GM18951 (cell line): ENCODE measurements at regions of chr12 and their contacts with region 1.

Region 1: DNA sequence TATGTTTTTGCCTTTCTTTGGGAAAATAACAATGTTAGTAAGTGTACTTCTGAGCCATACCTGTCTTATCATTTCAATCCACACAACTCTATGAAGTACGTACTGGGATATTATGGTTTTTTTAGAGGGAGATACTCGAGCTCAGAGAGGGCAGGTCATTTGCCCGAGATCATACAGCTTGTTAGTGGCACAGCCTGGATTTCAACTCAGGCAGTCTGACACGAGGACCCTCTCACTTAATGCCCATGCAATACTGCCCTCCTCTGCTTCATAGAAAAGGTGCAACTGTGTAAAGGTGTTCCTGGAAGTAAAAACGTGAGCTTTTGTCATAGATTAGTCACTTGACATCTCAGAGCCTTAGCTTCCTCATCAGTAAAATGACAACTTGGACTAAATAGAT is 128.0 kb downstream of the NDUFA12 start:
- POLR2A ChIP-seq: no peak

Region 2: DNA sequence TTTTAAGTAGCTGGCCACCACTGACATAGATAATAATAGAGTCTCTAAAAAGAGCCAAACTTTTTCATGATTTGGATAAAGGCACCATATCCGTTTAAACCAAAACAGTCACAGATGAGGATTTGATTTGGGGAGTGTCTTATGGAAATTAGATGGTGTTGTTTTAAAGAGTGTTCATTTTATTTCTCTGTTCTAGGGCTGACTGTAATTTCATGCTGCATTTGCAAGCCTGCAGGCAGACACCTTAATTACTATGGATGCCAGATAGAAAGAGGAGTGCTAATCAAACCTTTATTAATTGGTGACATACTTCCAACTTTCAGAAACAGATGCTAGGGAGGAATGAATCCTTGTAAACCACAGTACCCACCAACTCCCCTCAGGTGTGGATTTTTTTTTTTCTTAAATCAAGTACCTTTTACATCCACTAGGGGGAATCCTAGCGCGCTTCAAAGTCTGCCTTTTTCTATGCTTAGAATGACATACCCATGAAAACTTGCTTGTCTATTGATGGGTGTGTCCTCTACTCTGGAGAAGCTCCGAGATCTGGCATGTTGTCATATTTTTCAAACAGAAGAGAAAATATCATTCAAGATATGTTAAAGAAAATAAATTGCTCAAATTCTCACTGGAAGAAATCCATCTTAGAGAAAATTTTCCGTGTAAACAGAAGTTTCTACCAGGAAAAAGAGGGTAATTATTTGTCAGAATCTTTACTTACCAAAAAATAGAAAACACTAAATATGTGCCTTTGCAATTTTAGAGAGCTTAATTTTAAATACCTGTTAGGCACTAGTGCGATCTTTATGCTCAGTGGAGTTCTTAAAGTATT is 741.3 kb before region 1 on chr12:
- in situ Hi-C with region 1: loop called (anchors 25 kb)
- POLR2A ChIP-seq: no peak

Region 3: GRCh38 chr12:94560431-94561221 is 314.9 kb before region 1 on chr12:
- in situ Hi-C with region 1: loop called (anchors 25 kb)
- POLR2A ChIP-seq: no peak